GM12878 (cell line): ENCODE measurements at regions of chr15 and their contacts with region 1.

Region 1: DNA sequence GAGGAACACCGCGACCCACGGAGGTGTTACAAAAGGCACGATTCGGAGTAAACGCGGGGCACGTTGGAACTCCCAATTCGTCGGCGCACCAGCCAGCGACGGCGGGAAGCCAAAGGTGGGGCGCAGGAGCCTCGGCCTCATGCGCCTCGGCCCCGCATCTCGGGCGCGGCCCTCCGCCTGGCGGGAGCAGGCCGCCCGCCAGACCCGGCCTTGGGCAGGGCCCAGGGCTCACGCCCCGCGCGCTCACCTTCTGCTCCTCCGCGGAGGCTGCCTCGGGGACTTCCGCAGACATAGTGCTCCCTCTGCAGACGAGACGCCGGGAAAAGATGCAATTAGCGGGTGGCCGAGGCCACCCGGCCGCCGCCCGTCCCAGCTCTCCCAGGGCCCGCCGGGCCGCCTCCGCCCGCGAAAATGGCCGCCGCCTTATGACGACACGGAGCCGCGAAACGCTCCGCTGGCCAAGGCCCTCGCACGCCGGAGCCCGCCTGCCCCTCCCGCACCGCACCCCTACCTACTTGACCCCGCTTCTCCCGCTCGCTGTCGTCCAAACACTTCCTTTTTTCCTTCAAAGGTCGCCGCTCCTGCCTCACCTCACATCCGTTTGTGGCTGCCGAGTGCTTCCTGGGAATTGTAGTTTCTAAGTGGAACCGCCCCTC is at the start of gene ARPP19:
- DNase-seq: peak; percentile 69
- ATAC-seq: peak; percentile 81
- H3K4me3 ChIP-seq: peak within 1 kb of the TSS; percentile 72
- H3K27ac ChIP-seq: peak within 1 kb of the TSS; percentile 93
- H3K4me1 ChIP-seq: peaks cover 7% of the 10 kb centered on the region
- H3K27me3 ChIP-seq: no peaks in the 10 kb centered on the region
- CTCF ChIP-seq: peak in 1 of 3 experiments; percentile 39; a peak in 2 of 6 replicates
- EP300 ChIP-seq: no peak
- POLR2A ChIP-seq: peak; percentile 81
- RAD21 ChIP-seq: peak; percentile 34
- polyA plus RNA-seq, gene ARPP19: 77.2 to 114 TPM

Region 2: GRCh38 chr15:52551762-52552161 is 17.0 kb before region 1 on chr15:
- CTCF ChIA-PET with region 1: interaction called, 37 read pairs
- POLR2A ChIA-PET with region 1: interaction called, 13 read pairs
- RAD21 ChIA-PET with region 1: interaction called, 9 read pairs
- SMC1A ChIA-PET with region 1: interaction called, 45 read pairs
- in situ Hi-C with region 1: no loop called
- intact Hi-C with region 1: no loop called
- DNase-seq: no peak
- ATAC-seq: no peak
- H3K4me3 ChIP-seq: no peak overlapping the region
- H3K27ac ChIP-seq: no peak overlapping the region
- H3K4me1 ChIP-seq: peaks cover 12% of the 10 kb centered on the region
- H3K27me3 ChIP-seq: no peaks in the 10 kb centered on the region
- CTCF ChIP-seq: no peak
- EP300 ChIP-seq: no peak
- POLR2A ChIP-seq: no peak
- RAD21 ChIP-seq: no peak

Region 3: GRCh38 chr15:52679232-52680040 is 110.7 kb after region 1 on chr15 and contains the start of gene ATOSA:
- CTCF ChIA-PET with region 1: no interaction called
- POLR2A ChIA-PET with region 1: no interaction called
- RAD21 ChIA-PET with region 1: interaction called, 3 read pairs
- SMC1A ChIA-PET with region 1: interaction called, 3 read pairs
- in situ Hi-C with region 1: no loop called
- intact Hi-C with region 1: loop called (anchors 5 kb)
- DNase-seq: peak; percentile 48
- ATAC-seq: peak; percentile 84
- H3K4me3 ChIP-seq: peak within 1 kb of the TSS; percentile 93
- H3K27ac ChIP-seq: peak within 1 kb of the TSS; percentile 84
- H3K4me1 ChIP-seq: peaks cover 43% of the 10 kb centered on the region
- H3K27me3 ChIP-seq: no peaks in the 10 kb centered on the region
- CTCF ChIP-seq: no peak
- EP300 ChIP-seq: no peak
- POLR2A ChIP-seq: peak; percentile 74
- RAD21 ChIP-seq: no peak
- polyA plus RNA-seq, gene ATOSA: 6.8 to 7.9 TPM

Region 4: GRCh38 chr15:52730173-52730572 is 161.4 kb after region 1 on chr15:
- CTCF ChIA-PET with region 1: interaction called, 12 read pairs
- POLR2A ChIA-PET with region 1: no interaction called
- RAD21 ChIA-PET with region 1: interaction called, 11 read pairs
- SMC1A ChIA-PET with region 1: interaction called, 4 read pairs
- in situ Hi-C with region 1: no loop called
- intact Hi-C with region 1: loop called (anchors 5 kb)
- DNase-seq: peak; percentile 28
- ATAC-seq: peak; percentile 80
- H3K4me3 ChIP-seq: no peak overlapping the region; the same call in 1 of the 2 replicates
- H3K27ac ChIP-seq: no peak overlapping the region
- H3K4me1 ChIP-seq: peaks cover 9% of the 10 kb centered on the region; the same call in 1 of the 2 replicates
- H3K27me3 ChIP-seq: no peaks in the 10 kb centered on the region
- CTCF ChIP-seq: 0 out of 6 replicates have a peak, but pooled peaks of 1 of the 3 experiments have one; percentile 6
- EP300 ChIP-seq: no peak
- POLR2A ChIP-seq: no peak
- RAD21 ChIP-seq: peak; percentile 36; the same call in 1 of the 2 replicates